Activated T-helper 2 cell treated with anti-CD3 and anti-CD28 coated beads, Interferon-gamma antibody, Interleukin-2, Interleukin-4, amounts not matched to agents 10 μg/mL and 5 μg/mL and 100 μg/mL, durations not matched to agents 14 hours and 24 hours and 36 hours (primary cell): ENCODE measurements at regions of chr2 and their contacts with region 1.

Region 1: GRCh38 chr2:54652540-54652939 is 70.9 kb upstream of the EML6 start:
- DNase-seq: no peak
- H3K4me3 Mint-ChIP-seq: no peak overlapping the region
- H3K27ac Mint-ChIP-seq: peak overlapping the region; percentile 43
- H3K4me1 Mint-ChIP-seq: peaks cover 12% of the 10 kb centered on the region
- H3K27me3 Mint-ChIP-seq: no peaks in the 10 kb centered on the region

Region 2: GRCh38 chr2:54618646-54619565 is 33.6 kb before region 1 on chr2:
- intact Hi-C with region 1: loop called (anchors 5 kb)
- DNase-seq: no peak
- H3K4me3 Mint-ChIP-seq: no peak overlapping the region
- H3K27ac Mint-ChIP-seq: peak overlapping the region; percentile 46
- H3K4me1 Mint-ChIP-seq: peaks cover 20% of the 10 kb centered on the region
- H3K27me3 Mint-ChIP-seq: no peaks in the 10 kb centered on the region